CD4-positive, alpha-beta memory T cell (primary cell): ENCODE measurements at regions of chr3 and their contacts with region 1.

Region 1: DNA sequence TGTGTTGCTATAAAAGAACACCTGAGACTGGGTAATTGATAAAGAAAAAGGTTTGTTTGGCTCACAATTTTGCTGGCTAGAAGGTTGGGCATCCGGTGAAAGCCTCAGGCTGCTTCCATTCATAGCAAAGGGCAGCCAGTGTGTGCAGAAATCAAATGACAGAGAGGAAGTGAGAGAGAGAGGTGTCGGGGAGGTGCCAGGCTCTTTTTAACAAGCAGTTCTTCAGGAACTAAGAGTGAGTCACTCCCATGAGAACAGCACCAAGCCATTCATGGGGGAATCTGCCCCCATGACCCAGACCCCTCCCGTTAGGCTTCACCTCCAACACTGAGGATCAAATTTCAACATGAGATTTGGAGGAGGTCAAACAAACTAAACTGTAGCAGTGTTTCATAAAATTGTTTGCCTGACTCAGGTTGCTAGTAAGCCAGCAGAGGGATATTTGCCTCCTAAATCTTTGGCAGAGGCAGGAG is 4.5 kb upstream of the PARP15 start:
- DNase-seq: peak in 2 of 5 donors; percentile 19 to 51
- H3K4me3 ChIP-seq: no peak overlapping the region
- H3K4me3 Mint-ChIP-seq: peak overlapping the region in 1 of 8 donors; percentile 52
- H3K27ac ChIP-seq: no peak overlapping the region
- H3K27ac Mint-ChIP-seq: peak overlapping the region; percentile 1 to 91 (median 76)
- H3K4me1 ChIP-seq: peaks cover 56% of the 10 kb centered on the region
- H3K4me1 Mint-ChIP-seq: peaks cover 50 to 81% (median 60%) of the 10 kb centered on the region in 4 donors
- H3K27me3 ChIP-seq: no peaks in the 10 kb centered on the region
- H3K27me3 Mint-ChIP-seq: no peaks in the 10 kb centered on the region

Region 2: DNA sequence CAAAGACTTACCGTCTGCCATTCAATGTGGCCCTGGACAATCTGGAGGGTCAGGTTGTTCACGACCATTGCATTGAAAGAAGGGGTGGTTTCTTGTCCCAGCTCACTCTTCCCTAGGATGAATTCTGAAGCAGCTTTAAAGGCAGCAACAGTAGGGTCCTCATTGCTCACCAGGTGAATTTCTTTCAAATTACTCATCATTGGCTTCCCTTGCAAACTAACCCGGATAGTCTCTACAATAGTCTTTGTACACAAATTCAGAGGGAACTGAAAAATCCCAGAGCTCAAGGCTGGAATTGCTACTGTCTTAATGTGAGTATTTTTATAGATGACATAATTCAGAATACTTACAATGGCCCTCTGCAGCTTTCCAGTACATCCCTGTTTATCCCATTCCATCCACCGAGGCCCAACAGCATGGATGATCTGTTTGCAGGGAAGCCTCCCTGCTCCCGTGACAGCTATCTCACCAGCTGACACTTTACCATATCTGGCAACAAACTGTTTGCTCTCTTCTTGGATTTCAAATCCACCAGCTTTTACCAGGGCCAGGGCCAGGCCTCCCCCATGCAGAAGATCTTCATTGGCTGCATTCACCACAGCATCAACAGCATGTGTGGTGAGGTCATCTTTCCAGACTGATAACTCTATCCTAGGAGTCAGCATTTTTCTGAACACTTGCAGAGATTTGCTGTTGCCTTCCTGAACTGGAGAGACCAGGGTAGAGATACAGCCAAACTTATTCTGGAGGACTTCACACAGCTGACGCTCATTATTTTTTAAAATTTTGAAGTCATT is 17.5 kb before region 1 on chr3:
- CTCF ChIA-PET with region 1: interaction called, 12 read pairs
- POLR2A ChIA-PET with region 1: interaction called, 5 read pairs
- intact Hi-C with region 1: no loop called
- DNase-seq: no peak
- H3K4me3 ChIP-seq: no peak overlapping the region
- H3K4me3 Mint-ChIP-seq: no peak overlapping the region
- H3K27ac ChIP-seq: no peak overlapping the region
- H3K27ac Mint-ChIP-seq: peak overlapping the region in 1 of 7 donors; percentile 81
- H3K4me1 ChIP-seq: no peaks in the 10 kb centered on the region
- H3K4me1 Mint-ChIP-seq: peaks cover 16 to 26% (median 23%) of the 10 kb centered on the region in 4 donors
- H3K27me3 ChIP-seq: no peaks in the 10 kb centered on the region
- H3K27me3 Mint-ChIP-seq: no peaks in the 10 kb centered on the region

Region 3: GRCh38 chr3:122609798-122610559 is 37.0 kb after region 1 on chr3:
- CTCF ChIA-PET with region 1: interaction called, 3 read pairs
- POLR2A ChIA-PET with region 1: no interaction called
- intact Hi-C with region 1: loop called (anchors 5 kb)
- DNase-seq: peak in 2 of 5 donors; percentile 1 to 28
- H3K4me3 ChIP-seq: no peak overlapping the region
- H3K4me3 Mint-ChIP-seq: peak overlapping the region in 3 of 8 donors; percentile 11 to 50 (median 37)
- H3K27ac ChIP-seq: no peak overlapping the region
- H3K27ac Mint-ChIP-seq: peak overlapping the region; percentile 36 to 89 (median 63)
- H3K4me1 ChIP-seq: no peaks in the 10 kb centered on the region
- H3K4me1 Mint-ChIP-seq: peaks cover 5 to 13% (median 10%) of the 10 kb centered on the region in 4 donors
- H3K27me3 ChIP-seq: no peaks in the 10 kb centered on the region
- H3K27me3 Mint-ChIP-seq: no peaks in the 10 kb centered on the region